ENCODE measurements at regions of chr7 and their contacts with region 1.

Region 1: DNA sequence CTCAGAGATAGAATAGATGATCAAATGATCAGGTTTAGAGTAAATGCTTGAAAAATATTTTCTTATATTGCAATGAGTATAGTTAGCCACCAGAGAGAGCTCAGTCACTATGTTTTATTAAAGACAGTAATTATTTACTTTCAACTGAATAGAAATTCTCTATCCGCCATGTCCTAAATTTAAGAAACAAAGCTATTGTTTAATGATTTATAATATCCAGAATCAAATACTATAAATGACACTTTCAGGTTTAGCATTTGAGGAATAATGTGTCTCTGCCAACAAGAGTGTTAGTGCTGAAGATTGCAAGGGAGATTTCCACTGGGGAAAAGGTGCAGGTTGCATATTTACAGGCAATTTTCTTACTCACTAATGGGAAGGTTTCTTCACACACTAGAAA is 184.7 kb downstream of the DGKB start:
- DNase-seq: no peak
- H3K4me3 ChIP-seq: no peak overlapping the region
- H3K4me3 Mint-ChIP-seq: no peak overlapping the region
- H3K27ac Mint-ChIP-seq: no peak overlapping the region
- H3K4me1 ChIP-seq: no peaks in the 10 kb centered on the region
- H3K4me1 Mint-ChIP-seq: peaks cover 11% of the 10 kb centered on the region
- H3K27me3 ChIP-seq: no peaks in the 10 kb centered on the region
- H3K27me3 Mint-ChIP-seq: no peaks in the 10 kb centered on the region
- CTCF ChIP-seq: peak; percentile 19 to 49

Region 2: DNA sequence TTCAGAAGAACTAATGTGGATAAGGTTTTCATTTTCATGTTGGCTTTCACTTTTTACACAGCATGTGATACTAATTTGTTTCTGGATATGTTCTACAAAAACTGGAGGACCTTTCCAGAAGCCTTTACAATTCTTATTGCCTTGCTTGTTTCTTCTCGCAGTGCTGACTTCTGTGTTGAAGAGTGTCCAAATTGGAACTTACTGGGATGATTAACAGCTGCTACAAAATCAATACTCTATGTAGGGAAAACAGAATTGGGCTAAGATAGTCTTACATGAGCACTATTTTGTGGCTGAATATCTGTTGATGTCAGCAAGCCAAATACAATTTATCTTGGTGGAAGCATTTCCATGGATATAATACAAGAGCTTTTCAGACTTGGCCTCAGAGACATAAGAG is 166.5 kb before region 1 on chr7:
- CTCF ChIA-PET with region 1: no interaction called
- POLR2A ChIA-PET with region 1: no interaction called
- intact Hi-C with region 1: no loop called
- DNase-seq: no peak
- H3K4me3 ChIP-seq: no peak overlapping the region
- H3K4me3 Mint-ChIP-seq: no peak overlapping the region
- H3K27ac Mint-ChIP-seq: no peak overlapping the region
- H3K4me1 ChIP-seq: no peaks in the 10 kb centered on the region
- H3K4me1 Mint-ChIP-seq: no peaks in the 10 kb centered on the region
- H3K27me3 ChIP-seq: no peaks in the 10 kb centered on the region
- H3K27me3 Mint-ChIP-seq: peaks cover 7% of the 10 kb centered on the region
- CTCF ChIP-seq: no peak

Region 3: GRCh38 chr7:14924398-14924797 is 206.6 kb after region 1 on chr7:
- CTCF ChIA-PET with region 1: no interaction called
- POLR2A ChIA-PET with region 1: no interaction called
- intact Hi-C with region 1: loop called (anchors 2 kb)
- DNase-seq: no peak
- H3K4me3 ChIP-seq: no peak overlapping the region
- H3K4me3 Mint-ChIP-seq: no peak overlapping the region
- H3K27ac Mint-ChIP-seq: no peak overlapping the region
- H3K4me1 ChIP-seq: no peaks in the 10 kb centered on the region
- H3K4me1 Mint-ChIP-seq: no peaks in the 10 kb centered on the region
- H3K27me3 ChIP-seq: no peaks in the 10 kb centered on the region
- H3K27me3 Mint-ChIP-seq: no peaks in the 10 kb centered on the region
- CTCF ChIP-seq: no peak

Region 4: GRCh38 chr7:15305002-15305600 is 587.3 kb after region 1 on chr7:
- CTCF ChIA-PET with region 1: no interaction called
- POLR2A ChIA-PET with region 1: no interaction called
- intact Hi-C with region 1: loop called (anchors 10 kb)
- DNase-seq: peak; percentile 49 to 69
- H3K4me3 ChIP-seq: no peak overlapping the region
- H3K4me3 Mint-ChIP-seq: no peak overlapping the region
- H3K27ac Mint-ChIP-seq: no peak overlapping the region
- H3K4me1 ChIP-seq: no peaks in the 10 kb centered on the region
- H3K4me1 Mint-ChIP-seq: no peaks in the 10 kb centered on the region
- H3K27me3 ChIP-seq: no peaks in the 10 kb centered on the region
- H3K27me3 Mint-ChIP-seq: no peaks in the 10 kb centered on the region
- CTCF ChIP-seq: peak; percentile 73 to 85

Measured in Caco-2 (cell line).